ENCODE measurements at regions of chr11 and their contacts with region 1.

Region 1: GRCh38 chr11:57778318-57779037 is 16.9 kb downstream of the CTNND1 start:
- DNase-seq: no peak
- H3K4me3 ChIP-seq: no peak overlapping the region
- H3K27ac ChIP-seq: no peak overlapping the region
- H3K4me1 ChIP-seq: no peaks in the 10 kb centered on the region
- CTCF ChIP-seq: no peak

Region 2: GRCh38 chr11:57763568-57763967 is 14.9 kb before region 1 on chr11:
- CTCF ChIA-PET with region 1: no interaction called
- POLR2A ChIA-PET with region 1: interaction called, 11 read pairs
- intact Hi-C with region 1: no loop called
- DNase-seq: no peak
- H3K4me3 ChIP-seq: no peak overlapping the region
- H3K27ac ChIP-seq: no peak overlapping the region
- H3K4me1 ChIP-seq: no peaks in the 10 kb centered on the region
- CTCF ChIP-seq: no peak